CD8-positive, alpha-beta memory T cell (primary cell): ENCODE measurements at regions of chr10 and their contacts with region 1.

Region 1: DNA sequence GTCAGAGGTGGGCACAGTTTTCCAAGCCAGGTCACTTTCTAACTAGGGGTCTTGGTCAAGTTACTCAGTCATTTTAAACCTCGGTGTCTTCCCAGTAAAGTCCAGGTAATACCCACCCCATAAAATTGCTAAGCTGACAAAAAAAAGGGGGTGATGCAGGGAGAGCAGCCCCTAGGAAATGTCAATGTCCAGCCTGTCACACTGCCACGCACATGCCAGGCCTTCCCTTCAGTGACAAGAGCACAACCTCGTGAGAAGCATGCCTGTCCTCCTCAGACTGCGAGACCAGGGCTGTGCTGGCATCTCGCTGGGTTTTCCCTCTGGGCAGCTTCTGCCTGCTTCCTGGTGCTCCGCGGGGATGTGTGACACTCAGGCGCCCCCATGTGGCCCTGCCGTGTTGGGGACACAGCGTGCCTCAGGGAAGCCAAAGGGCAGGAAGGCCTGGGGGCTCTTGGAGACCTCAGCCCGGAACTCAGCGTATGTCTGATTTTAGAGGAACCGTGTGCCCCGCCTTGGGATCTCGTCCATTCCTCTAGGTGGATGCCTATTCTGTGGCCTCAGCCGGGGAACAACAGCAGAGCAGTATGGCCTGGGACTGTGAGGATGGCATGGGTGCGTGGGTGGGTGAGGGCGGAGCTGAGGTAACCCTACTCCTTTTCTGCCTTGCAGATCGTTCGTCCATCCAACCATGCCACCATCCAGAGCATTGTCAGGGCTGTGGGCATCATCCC is 10.2 kb upstream of the GDF2 start:
- DNase-seq: peak; percentile 54 to 87 (median 69)
- H3K4me3 ChIP-seq: peak overlapping the region; percentile 55
- H3K4me3 Mint-ChIP-seq: peak overlapping the region in 6 of 7 donors; percentile 40 to 73 (median 58)
- H3K27ac ChIP-seq: no peak overlapping the region
- H3K27ac Mint-ChIP-seq: peak overlapping the region; percentile 32 to 84 (median 73)
- H3K4me1 ChIP-seq: peaks cover 32% of the 10 kb centered on the region
- H3K4me1 Mint-ChIP-seq: peaks cover 18 to 26% (median 20%) of the 10 kb centered on the region in 3 donors
- H3K27me3 ChIP-seq: no peaks in the 10 kb centered on the region
- H3K27me3 Mint-ChIP-seq: peaks cover 0 to 1% of the 10 kb centered on the region in 2 donors

Region 2: GRCh38 chr10:47024399-47025252 is 287.5 kb before region 1 on chr10:
- CTCF ChIA-PET with region 1: interaction called, 95 read pairs
- POLR2A ChIA-PET with region 1: no interaction called
- DNase-seq: peak; percentile 25 to 76 (median 42)
- H3K4me3 ChIP-seq: no peak overlapping the region
- H3K4me3 Mint-ChIP-seq: no peak overlapping the region
- H3K27ac ChIP-seq: no peak overlapping the region
- H3K27ac Mint-ChIP-seq: peak overlapping the region in 1 of 8 donors; percentile 56
- H3K4me1 ChIP-seq: no peaks in the 10 kb centered on the region
- H3K4me1 Mint-ChIP-seq: peaks cover 0 to 5% (median 0%) of the 10 kb centered on the region in 3 donors
- H3K27me3 ChIP-seq: no peaks in the 10 kb centered on the region
- H3K27me3 Mint-ChIP-seq: peaks cover 6 to 7% of the 10 kb centered on the region in 2 donors

Region 3: DNA sequence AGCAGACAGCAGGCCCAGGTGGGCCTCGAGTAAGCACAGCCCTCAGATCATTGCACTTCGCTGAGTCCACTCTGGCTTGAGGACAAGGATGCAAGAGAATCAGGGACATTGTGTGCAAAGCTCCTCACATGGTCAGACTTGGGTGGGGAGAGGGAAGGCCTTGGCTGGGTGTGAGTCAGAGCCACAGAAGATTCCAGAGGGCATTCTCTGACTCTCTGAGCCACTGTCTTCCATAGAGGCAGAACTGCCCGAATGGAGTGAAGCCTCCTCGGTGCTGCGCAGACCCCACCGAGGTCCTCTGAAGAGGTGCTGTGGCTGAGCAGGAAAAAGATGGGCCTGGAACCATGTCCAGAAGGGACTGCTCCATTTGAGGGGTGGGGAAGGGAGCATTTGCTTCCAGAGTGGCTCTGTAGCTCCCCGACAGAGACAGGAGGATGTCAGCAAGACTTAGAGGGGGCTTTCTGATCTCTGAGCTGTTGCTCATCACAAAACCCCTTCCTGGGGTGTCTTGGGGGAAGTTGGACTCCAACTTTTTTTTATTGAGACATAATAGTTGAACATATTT is 280.1 kb before region 1 on chr10:
- CTCF ChIA-PET with region 1: interaction called, 95 read pairs
- POLR2A ChIA-PET with region 1: no interaction called
- DNase-seq: no peak
- H3K4me3 ChIP-seq: no peak overlapping the region
- H3K4me3 Mint-ChIP-seq: no peak overlapping the region
- H3K27ac ChIP-seq: no peak overlapping the region
- H3K27ac Mint-ChIP-seq: peak overlapping the region in 1 of 8 donors; percentile 21
- H3K4me1 ChIP-seq: no peaks in the 10 kb centered on the region
- H3K4me1 Mint-ChIP-seq: no peaks in the 10 kb centered on the region
- H3K27me3 ChIP-seq: no peaks in the 10 kb centered on the region
- H3K27me3 Mint-ChIP-seq: peaks cover 0 to 2% of the 10 kb centered on the region in 2 donors

Region 4: GRCh38 chr10:47165711-47166524 is 146.2 kb before region 1 on chr10:
- CTCF ChIA-PET with region 1: interaction called, 14 read pairs
- POLR2A ChIA-PET with region 1: no interaction called
- DNase-seq: peak in 3 of 5 donors; percentile 26 to 67 (median 58)
- H3K4me3 ChIP-seq: peak overlapping the region; percentile 58
- H3K4me3 Mint-ChIP-seq: peak overlapping the region; percentile 69 to 89 (median 84)
- H3K27ac ChIP-seq: no peak overlapping the region
- H3K27ac Mint-ChIP-seq: peak overlapping the region; percentile 77 to 94 (median 92)
- H3K4me1 ChIP-seq: peaks cover 21% of the 10 kb centered on the region
- H3K4me1 Mint-ChIP-seq: peaks cover 15 to 28% (median 22%) of the 10 kb centered on the region in 3 donors
- H3K27me3 ChIP-seq: no peaks in the 10 kb centered on the region
- H3K27me3 Mint-ChIP-seq: peaks cover 0 to 3% of the 10 kb centered on the region in 2 donors

Region 5: GRCh38 chr10:47346581-47347302 is 34.6 kb after region 1 on chr10:
- CTCF ChIA-PET with region 1: no interaction called
- POLR2A ChIA-PET with region 1: no interaction called
- DNase-seq: no peak
- H3K4me3 ChIP-seq: no peak overlapping the region
- H3K4me3 Mint-ChIP-seq: no peak overlapping the region
- H3K27ac ChIP-seq: no peak overlapping the region
- H3K27ac Mint-ChIP-seq: no peak overlapping the region
- H3K4me1 ChIP-seq: no peaks in the 10 kb centered on the region
- H3K4me1 Mint-ChIP-seq: no peaks in the 10 kb centered on the region
- H3K27me3 ChIP-seq: no peaks in the 10 kb centered on the region
- H3K27me3 Mint-ChIP-seq: peaks cover 0 to 5% of the 10 kb centered on the region in 2 donors